K562 (cell line): ENCODE measurements at regions of chr6 and their contacts with region 1.

Region 1: DNA sequence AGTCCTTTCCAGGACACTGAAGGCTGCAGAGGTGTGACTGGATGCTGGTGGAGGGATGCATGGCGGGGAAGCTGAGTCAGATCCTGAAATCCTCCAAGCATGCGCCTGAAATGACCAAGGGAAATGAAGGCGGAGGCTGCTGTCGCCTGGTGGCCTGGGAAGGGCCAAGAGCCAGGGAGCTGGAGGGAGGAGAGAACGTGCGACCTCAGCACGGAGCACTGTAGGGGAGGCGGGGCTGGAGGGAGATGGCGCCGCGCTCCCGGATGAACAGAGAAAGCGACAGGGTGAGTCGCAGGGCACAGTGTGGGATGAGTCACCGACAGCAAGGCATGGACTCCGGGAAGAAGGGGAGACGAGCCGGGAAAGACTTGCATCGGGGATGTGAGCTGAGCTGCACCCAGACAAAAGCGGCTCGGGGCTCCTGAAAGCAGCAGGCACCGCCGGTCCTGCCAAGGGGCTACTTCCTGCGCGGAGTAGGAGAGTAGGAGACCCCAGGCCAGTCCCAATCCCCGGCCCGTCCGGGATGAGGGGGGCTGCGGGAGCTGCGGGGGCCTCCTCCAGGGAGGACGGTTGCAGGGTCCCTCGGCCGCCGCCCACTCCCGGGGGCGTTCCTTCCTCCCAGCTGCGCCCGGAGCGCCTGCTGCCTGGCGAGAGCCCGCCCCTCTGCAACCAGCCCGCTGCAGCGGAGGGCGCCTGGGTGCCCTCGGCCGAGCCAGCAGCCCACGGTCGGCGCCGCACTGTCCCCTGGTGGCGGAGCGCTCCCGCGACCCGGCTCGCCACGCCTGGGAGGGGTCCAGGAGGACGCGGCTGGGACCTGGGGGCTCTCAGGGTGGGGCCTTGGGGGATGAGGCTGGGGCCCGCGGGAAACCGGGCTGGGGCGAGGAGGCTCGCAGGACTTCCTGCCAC is 11.0 kb upstream of the NQO2 start:
- DNase-seq: peak; percentile 84 to 96 (median 84)
- ATAC-seq: peak; percentile 84
- H3K4me3 ChIP-seq: peak overlapping the region; percentile 71
- H3K27ac ChIP-seq: peak overlapping the region; percentile 99
- H3K4me1 ChIP-seq: peaks cover 56% of the 10 kb centered on the region in 2 experiments
- H3K27me3 ChIP-seq: no peaks in the 10 kb centered on the region
- CTCF ChIP-seq: peak; percentile 81 to 98 (median 94)
- EP300 ChIP-seq: peak; percentile 26; the same call in 1 of the 2 replicates
- POLR2A ChIP-seq: peak; percentile 80
- RAD21 ChIP-seq: peak; percentile 93 to 98

Region 2: DNA sequence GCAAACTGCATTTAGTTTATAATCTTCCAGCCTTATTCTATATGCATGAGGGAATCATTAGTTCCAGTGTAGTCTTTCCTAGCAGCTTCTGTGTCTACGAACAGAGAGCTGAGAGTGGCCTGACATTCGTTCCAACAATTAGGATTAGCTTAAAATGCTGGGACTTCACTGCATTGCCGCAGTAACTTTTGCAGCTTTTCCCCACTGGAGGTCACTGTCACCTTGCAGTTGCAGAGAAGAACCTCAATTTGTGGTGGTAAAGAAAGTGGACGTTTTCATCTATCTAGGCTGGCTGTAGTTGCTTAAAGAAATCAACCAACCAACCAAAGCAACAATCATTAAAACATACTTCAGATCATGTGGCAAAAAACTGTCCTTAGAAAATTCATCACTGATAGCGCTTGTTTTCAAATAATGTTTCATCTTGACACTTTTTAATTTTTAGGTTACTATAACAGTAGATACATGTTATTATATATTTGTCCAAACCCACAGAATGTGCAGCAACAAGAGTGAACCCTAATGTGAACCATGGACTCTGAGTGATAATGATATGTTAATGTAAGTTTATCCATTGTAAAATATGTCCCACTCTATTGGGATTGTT is 250.2 kb before region 1 on chr6:
- CTCF ChIA-PET with region 1: interaction called, 4 read pairs
- POLR2A ChIA-PET with region 1: interaction called, 4 read pairs
- in situ Hi-C with region 1: no loop called
- intact Hi-C with region 1: loop called (anchors 2 kb)
- DNase-seq: peak; percentile 64 to 86 (median 68)
- ATAC-seq: peak; percentile 88
- H3K4me3 ChIP-seq: no peak overlapping the region
- H3K27ac ChIP-seq: no peak overlapping the region
- H3K4me1 ChIP-seq: peaks cover 8 to 31% of the 10 kb centered on the region in 2 experiments; a peak in 4 of 5 replicates
- H3K27me3 ChIP-seq: no peaks in the 10 kb centered on the region
- CTCF ChIP-seq: peak; percentile 91 to 96 (median 91)
- EP300 ChIP-seq: no peak
- POLR2A ChIP-seq: no peak
- RAD21 ChIP-seq: peak; percentile 97 to 98

Region 3: DNA sequence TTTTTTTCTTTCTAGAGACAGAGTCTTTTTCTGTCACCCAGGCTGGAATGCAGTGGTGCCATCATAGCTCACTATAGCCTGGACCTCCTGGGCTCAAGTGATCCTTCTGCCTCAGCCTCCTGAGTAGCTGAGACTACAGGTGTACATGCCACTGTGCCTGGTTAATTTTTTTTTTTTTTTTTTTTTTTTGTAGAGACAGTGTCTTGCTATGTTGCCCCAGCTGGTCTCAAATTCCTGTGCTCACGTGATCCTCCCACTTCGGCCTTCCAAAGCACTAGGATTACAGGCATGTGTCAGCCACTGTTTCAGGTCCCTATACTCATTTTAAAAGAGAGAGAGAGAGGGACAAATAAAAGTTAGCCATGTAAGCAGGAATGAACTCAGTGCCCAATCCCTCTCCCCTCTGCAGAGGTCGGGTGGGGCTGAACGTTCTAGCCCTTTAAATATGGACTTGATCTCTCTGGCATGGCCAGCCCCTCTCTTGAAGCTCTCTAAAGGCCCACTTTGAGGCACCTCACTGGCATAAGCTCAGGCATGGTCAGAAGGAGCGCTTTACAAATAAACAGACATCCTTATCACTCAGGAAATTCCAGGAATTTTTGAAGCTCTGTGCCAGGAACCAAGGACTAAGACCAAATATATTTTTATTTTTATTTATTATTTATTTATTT is 138.1 kb before region 1 on chr6:
- CTCF ChIA-PET with region 1: interaction called, 26 read pairs
- POLR2A ChIA-PET with region 1: interaction called, 7 read pairs
- in situ Hi-C with region 1: loop called (anchors 5 kb)
- intact Hi-C with region 1: loop called (anchors 1 kb)
- DNase-seq: no peak
- ATAC-seq: no peak
- H3K4me3 ChIP-seq: no peak overlapping the region
- H3K27ac ChIP-seq: peak overlapping the region; percentile 35; the same call in 1 of the 3 replicates
- H3K4me1 ChIP-seq: peaks cover 19 to 53% of the 10 kb centered on the region in 2 experiments
- H3K27me3 ChIP-seq: no peaks in the 10 kb centered on the region
- CTCF ChIP-seq: no peak
- EP300 ChIP-seq: no peak
- POLR2A ChIP-seq: no peak
- RAD21 ChIP-seq: no peak

Region 4: GRCh38 chr6:2931970-2932748 is 56.5 kb before region 1 on chr6:
- CTCF ChIA-PET with region 1: interaction called, 20 read pairs
- POLR2A ChIA-PET with region 1: interaction called, 4 read pairs
- in situ Hi-C with region 1: no loop called
- intact Hi-C with region 1: loop called (anchors 1 kb)
- DNase-seq: peak; percentile 94 to 97 (median 94)
- ATAC-seq: peak; percentile 99
- H3K4me3 ChIP-seq: no peak overlapping the region
- H3K27ac ChIP-seq: 0 out of 3 replicates have a peak overlapping the region, but pooled peaks have one; percentile 2
- H3K4me1 ChIP-seq: peaks cover 9 to 13% of the 10 kb centered on the region in 2 experiments; a peak in 4 of 5 replicates
- H3K27me3 ChIP-seq: no peaks in the 10 kb centered on the region
- CTCF ChIP-seq: peak; percentile 98 to 100 (median 99)
- EP300 ChIP-seq: peak; percentile 97
- POLR2A ChIP-seq: no peak
- RAD21 ChIP-seq: peak; percentile 98

Region 5: DNA sequence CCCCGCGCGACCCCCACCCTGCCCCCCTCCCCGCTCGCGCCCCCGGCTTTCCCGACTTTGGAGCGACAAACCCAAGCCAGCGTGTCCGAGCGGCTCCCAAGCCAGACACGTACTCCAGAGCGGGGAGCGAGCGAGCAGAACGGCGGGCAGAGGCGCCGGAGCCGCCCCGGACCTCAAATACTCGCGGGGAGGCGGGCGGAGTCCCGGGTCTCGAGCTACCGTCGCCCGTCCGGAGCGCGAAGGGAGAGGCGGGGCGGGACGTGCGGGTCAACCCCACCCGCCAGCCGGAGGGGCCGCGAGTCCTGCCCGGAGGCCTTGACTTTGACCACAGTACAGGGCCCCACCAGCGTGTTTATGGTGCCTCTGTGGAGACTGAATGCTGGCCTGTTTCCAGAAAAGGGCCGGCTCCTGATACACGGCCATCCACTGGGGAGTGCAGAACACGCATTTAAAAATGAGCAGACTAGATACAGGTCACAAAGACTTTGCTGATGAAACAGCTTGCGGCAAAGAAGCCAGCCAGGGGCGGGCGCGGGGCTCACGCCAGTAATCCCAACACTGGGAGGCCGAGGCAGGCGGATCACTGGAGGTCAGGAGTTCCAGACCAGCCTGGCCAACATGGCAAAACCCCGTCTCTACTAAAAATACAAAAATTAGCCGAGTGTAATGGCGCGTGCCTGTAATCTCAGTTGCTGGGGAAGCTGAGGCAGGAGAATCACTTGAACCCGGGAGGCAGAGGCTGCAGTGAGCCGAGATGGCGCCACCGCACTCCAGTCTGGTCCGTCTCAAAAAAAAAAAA is 17.1 kb before region 1 on chr6 and contains the start of gene SERPINB6:
- CTCF ChIA-PET with region 1: interaction called, 3 read pairs
- POLR2A ChIA-PET with region 1: interaction called, 22 read pairs
- in situ Hi-C with region 1: no loop called
- intact Hi-C with region 1: loop called (anchors 1 kb)
- DNase-seq: peak; percentile 79 to 90 (median 86)
- ATAC-seq: peak; percentile 72
- H3K4me3 ChIP-seq: peak within 1 kb of the TSS; percentile 67
- H3K27ac ChIP-seq: peak within 1 kb of the TSS; percentile 83
- H3K4me1 ChIP-seq: peaks cover 31 to 35% of the 10 kb centered on the region in 2 experiments
- H3K27me3 ChIP-seq: no peaks in the 10 kb centered on the region
- CTCF ChIP-seq: no peak
- EP300 ChIP-seq: no peak
- POLR2A ChIP-seq: peak; percentile 60
- RAD21 ChIP-seq: peak in 1 of 2 experiments; percentile 11; a peak in 1 of 4 replicates
- polyA plus RNA-seq, gene SERPINB6: 143 to 211 TPM

Region 6: GRCh38 chr6:3052481-3053230 is 64.0 kb after region 1 on chr6:
- CTCF ChIA-PET with region 1: no interaction called
- POLR2A ChIA-PET with region 1: interaction called, 18 read pairs
- in situ Hi-C with region 1: no loop called
- intact Hi-C with region 1: no loop called
- DNase-seq: peak in 3 of 4 experiments; percentile 41 to 53 (median 45)
- ATAC-seq: peak; percentile 1; the same call in 2 of the 3 replicates
- H3K4me3 ChIP-seq: peak overlapping the region; percentile 66
- H3K27ac ChIP-seq: peak overlapping the region; percentile 80
- H3K4me1 ChIP-seq: peaks cover 33 to 35% of the 10 kb centered on the region in 2 experiments
- H3K27me3 ChIP-seq: no peaks in the 10 kb centered on the region
- CTCF ChIP-seq: no peak
- EP300 ChIP-seq: no peak
- POLR2A ChIP-seq: no peak
- RAD21 ChIP-seq: no peak

Region 7: DNA sequence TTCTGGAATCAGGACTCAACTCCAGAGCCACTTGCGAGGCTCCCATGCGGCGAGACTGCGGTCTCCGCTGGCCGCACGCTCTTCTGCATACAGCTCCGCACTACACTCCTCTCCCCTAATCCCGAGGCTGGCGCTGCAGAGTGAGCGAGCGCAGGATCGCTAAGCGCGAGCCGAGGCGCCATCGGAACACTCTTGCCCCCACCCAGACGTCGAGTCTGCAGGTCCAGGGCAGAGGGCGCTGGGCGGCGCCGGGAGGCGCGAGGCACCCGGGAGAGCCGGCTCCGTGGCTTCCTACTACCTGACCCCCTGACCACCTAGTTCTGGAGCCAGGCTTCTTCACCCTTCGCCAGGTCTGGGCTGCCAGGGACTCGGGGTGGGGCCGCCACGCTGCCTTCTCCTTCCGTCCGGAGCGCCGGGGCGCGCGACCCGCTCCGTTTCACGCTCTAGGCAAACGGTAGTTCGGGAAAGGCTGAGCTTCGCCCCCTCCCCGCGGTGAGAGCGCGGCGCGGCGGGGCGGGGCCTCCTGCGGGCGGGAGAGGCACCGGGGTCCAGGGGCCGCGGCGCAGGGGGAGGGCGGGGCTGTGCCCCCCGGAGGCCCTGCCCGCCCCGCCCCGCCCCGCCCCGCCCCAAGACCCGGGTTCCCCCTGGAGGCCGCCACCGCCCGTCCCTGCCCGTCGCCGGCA is 174.0 kb after region 1 on chr6:
- CTCF ChIA-PET with region 1: no interaction called
- POLR2A ChIA-PET with region 1: interaction called, 3 read pairs
- in situ Hi-C with region 1: no loop called
- intact Hi-C with region 1: loop called (anchors 5 kb)
- DNase-seq: peak; percentile 92 to 99 (median 98)
- ATAC-seq: peak; percentile 79
- H3K4me3 ChIP-seq: peak overlapping the region; percentile 69
- H3K27ac ChIP-seq: peak overlapping the region; percentile 98
- H3K4me1 ChIP-seq: peaks cover 33 to 76% of the 10 kb centered on the region in 2 experiments
- H3K27me3 ChIP-seq: no peaks in the 10 kb centered on the region
- CTCF ChIP-seq: peak; percentile 21 to 38 (median 22); a peak in 4 of 6 replicates
- EP300 ChIP-seq: no peak; the same call in 1 of the 2 replicates
- POLR2A ChIP-seq: peak; percentile 93
- RAD21 ChIP-seq: peak; percentile 25 to 31